Posterior vena cava (tissue), 2 donors: ENCODE measurements at regions of chr22 and their contacts with region 1.

Region 1: GRCh38 chr22:44139773-44140172 is 41.0 kb upstream of the PARVG start:
- DNase-seq: no peak

Region 2: DNA sequence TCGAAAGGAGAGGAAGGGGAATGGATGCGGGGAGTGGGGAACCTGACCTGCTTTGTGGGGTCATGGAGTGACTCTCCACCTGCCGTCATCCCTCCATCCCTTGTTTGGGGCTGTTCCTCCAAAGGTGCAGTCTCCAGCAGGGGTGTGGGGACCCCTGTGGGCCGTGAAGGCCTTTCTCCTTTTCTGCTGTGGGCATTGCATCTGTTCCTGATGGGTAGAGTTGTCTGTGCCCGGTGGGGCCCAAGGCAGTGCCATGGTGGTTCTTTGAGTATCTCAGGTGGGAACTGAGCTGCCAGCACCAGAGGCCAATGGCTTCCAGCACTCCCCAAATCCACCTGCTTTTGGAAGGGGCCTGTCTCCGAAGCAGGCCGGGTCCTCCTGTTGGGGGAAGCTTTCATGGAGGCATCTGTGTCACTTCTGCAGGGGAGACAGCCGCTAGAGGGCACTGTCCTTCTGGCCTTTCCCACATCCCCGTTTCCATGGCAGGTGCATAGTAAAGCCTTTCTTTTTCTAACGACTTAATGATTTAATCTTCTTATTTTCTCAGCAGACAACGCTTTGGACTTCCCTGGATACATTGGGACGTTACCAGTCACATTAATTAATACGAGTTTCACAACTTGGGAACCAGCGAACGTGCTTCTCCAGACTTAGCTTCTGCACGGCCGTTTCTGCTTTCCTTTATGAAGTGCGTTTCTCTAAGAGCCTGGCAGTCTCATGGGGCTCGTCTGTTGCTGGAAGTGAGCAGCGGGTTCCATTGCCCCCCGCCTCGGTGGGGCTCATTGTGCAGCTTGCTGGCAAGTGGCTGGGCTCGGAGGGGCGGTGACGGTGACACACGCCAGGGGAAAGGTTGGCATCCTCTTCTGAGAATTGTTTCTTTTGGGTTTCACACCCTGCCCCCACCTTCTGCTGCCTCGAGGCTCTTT is 58.6 kb before region 1 on chr22:
- intact Hi-C with region 1: no loop called
- DNase-seq: peak; percentile 93

Region 3: DNA sequence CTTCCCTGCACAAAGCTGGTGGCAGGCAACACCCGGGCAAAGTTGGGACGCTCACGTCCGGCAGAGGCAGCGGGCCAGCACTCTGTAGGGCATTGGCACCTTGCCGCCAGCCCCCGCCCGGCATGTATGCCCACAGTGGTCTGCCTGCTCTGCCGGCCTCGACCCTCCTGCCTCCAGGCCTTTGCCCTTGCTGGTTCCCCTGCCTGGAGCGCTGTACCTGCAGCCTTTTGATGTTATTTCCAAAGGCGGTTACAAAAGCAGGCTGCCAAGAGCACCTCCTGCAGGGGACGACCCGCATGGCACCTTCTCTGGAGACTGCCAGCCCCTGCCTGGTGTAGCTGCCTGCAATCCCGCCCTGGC is 229.5 kb after region 1 on chr22:
- intact Hi-C with region 1: loop called in 1 of 2 experiments (anchors 5 kb)
- DNase-seq: peak; percentile 72